Mammary epithelial cell (primary cell): ENCODE measurements at regions of chr12 and their contacts with region 1.

Region 1: GRCh38 chr12:93397412-93397811 is 19.7 kb downstream of the NUDT4 start:
- DNase-seq: no peak
- H3K4me3 ChIP-seq: no peak overlapping the region
- H3K27ac ChIP-seq: no peak overlapping the region
- H3K4me1 ChIP-seq: no peaks in the 10 kb centered on the region
- H3K27me3 ChIP-seq: no peaks in the 10 kb centered on the region
- CTCF ChIP-seq: no peak

Region 2: DNA sequence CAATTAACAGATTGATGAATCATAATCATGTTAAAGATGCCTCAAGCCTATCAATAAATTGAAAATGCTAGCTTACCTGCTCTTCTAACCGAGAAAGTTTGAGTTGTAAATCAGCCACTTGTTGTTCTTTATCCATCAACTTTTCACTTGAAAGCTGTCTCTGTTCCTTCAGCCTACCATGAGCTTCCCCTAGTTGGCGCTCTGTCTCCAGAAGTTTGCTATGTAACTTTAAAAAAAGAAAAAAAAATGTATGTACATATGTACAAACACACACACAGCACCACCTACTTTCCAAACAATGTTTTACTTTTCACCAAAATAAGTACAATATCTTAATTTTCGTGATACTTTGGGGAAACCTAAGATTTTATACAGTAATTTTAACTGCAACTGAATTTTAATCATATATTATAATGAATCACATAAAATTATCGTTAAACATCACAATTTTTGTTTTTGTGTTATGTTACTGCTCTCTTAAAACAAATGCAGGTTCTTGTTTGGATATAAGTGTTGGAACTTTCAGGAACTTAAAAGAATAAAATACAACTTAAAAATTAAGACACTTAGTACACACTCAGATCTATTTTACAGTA is 569.5 kb before region 1 on chr12:
- CTCF ChIA-PET with region 1: no interaction called
- dilution Hi-C with region 1: no loop called
- in situ Hi-C with region 1: no loop called
- intact Hi-C with region 1: loop called (anchors 5 kb)
- DNase-seq: peak; percentile 30
- H3K4me3 ChIP-seq: no peak overlapping the region
- H3K27ac ChIP-seq: no peak overlapping the region
- H3K4me1 ChIP-seq: no peaks in the 10 kb centered on the region
- H3K27me3 ChIP-seq: no peaks in the 10 kb centered on the region
- CTCF ChIP-seq: peak; percentile 87 to 92

Region 3: GRCh38 chr12:92987362-92987761 is 410.1 kb before region 1 on chr12:
- CTCF ChIA-PET with region 1: no interaction called
- dilution Hi-C with region 1: no loop called
- in situ Hi-C with region 1: no loop called
- intact Hi-C with region 1: loop called (anchors 2 kb)
- DNase-seq: peak; percentile 58
- H3K4me3 ChIP-seq: no peak overlapping the region
- H3K27ac ChIP-seq: no peak overlapping the region
- H3K4me1 ChIP-seq: peaks cover 5% of the 10 kb centered on the region
- H3K27me3 ChIP-seq: no peaks in the 10 kb centered on the region
- CTCF ChIP-seq: peak; percentile 45 to 53

Region 4: GRCh38 chr12:93025145-93025805 is 372.1 kb before region 1 on chr12:
- CTCF ChIA-PET with region 1: no interaction called
- dilution Hi-C with region 1: no loop called
- in situ Hi-C with region 1: no loop called
- intact Hi-C with region 1: loop called (anchors 2 kb)
- DNase-seq: peak; percentile 58
- H3K4me3 ChIP-seq: no peak overlapping the region
- H3K27ac ChIP-seq: no peak overlapping the region
- H3K4me1 ChIP-seq: no peaks in the 10 kb centered on the region
- H3K27me3 ChIP-seq: no peaks in the 10 kb centered on the region
- CTCF ChIP-seq: peak; percentile 60 to 79

Region 5: GRCh38 chr12:93121729-93122488 is 275.5 kb before region 1 on chr12:
- CTCF ChIA-PET with region 1: interaction called, 11 read pairs
- dilution Hi-C with region 1: no loop called
- in situ Hi-C with region 1: no loop called
- intact Hi-C with region 1: no loop called
- DNase-seq: peak; percentile 95
- H3K4me3 ChIP-seq: peak overlapping the region in 2 of 3 experiments; percentile 12 to 21
- H3K27ac ChIP-seq: peak overlapping the region; percentile 95
- H3K4me1 ChIP-seq: peaks cover 28% of the 10 kb centered on the region
- H3K27me3 ChIP-seq: no peaks in the 10 kb centered on the region
- CTCF ChIP-seq: no peak

Region 6: DNA sequence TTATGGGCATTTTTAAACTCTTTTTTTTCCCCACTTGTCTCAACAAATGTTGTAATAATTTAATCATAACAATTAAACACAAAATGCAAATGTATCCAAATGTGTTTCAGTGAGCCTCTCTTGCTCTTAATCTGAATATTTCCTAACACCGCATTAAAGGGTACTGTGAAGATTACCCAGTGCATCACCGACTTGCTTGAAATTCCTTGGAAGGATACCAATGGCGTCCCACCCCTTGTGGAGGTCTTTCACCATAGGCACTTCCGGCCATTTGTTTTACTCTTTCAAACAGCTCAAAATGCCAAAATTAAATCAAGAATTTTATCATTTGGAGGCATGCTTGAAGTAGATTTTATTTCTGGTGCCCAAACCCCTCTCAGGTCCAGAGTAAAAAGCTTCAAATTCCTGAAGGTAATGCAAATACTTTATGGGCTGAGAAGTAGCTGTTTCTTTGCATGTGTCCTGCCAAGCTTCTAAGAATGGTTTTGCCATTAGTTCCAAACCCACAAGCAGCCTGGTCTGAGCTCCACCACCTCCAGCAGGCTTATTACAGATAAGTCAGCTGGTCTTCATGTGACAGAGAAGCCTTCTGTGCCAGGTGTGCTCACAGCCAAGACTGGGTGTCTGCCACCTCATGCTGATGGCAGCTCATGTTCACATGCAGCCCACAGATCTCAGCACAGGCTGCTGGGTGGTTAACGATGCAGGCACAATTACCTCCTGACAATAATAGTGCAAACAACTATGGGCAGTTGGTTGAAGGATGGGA is 36.1 kb before region 1 on chr12:
- CTCF ChIA-PET with region 1: no interaction called
- dilution Hi-C with region 1: no loop called
- in situ Hi-C with region 1: no loop called
- intact Hi-C with region 1: no loop called
- DNase-seq: peak; percentile 56
- H3K4me3 ChIP-seq: no peak overlapping the region
- H3K27ac ChIP-seq: no peak overlapping the region
- H3K4me1 ChIP-seq: no peaks in the 10 kb centered on the region
- H3K27me3 ChIP-seq: no peaks in the 10 kb centered on the region
- CTCF ChIP-seq: no peak

Region 7: GRCh38 chr12:93476555-93476954 is 79.1 kb after region 1 on chr12:
- CTCF ChIA-PET with region 1: no interaction called
- dilution Hi-C with region 1: no loop called
- in situ Hi-C with region 1: no loop called
- intact Hi-C with region 1: no loop called
- DNase-seq: no peak
- H3K4me3 ChIP-seq: no peak overlapping the region
- H3K27ac ChIP-seq: no peak overlapping the region
- H3K4me1 ChIP-seq: no peaks in the 10 kb centered on the region
- H3K27me3 ChIP-seq: no peaks in the 10 kb centered on the region
- CTCF ChIP-seq: no peak